ENCODE measurements at regions of chr19 and their contacts with region 1.

Region 1: GRCh38 chr19:17947815-17948513 is 15.1 kb downstream of the CCDC124 start:
- DNase-seq: peak; percentile 91
- H3K4me3 ChIP-seq: peak overlapping the region; percentile 45 to 79 (median 62)
- H3K27ac ChIP-seq: peak overlapping the region; percentile 39 to 68 (median 65)
- H3K4me1 ChIP-seq: peaks cover 28 to 52% (median 45%) of the 10 kb centered on the region in 4 donors
- H3K27me3 ChIP-seq: peaks cover 45% of the 10 kb centered on the region
- CTCF ChIP-seq: no peak
- EP300 ChIP-seq: no peak
- POLR2A ChIP-seq: no peak

Region 2: GRCh38 chr19:16394681-16395375 is 1553.1 kb before region 1 on chr19:
- in situ Hi-C with region 1: no loop called
- intact Hi-C with region 1: no loop called
- DNase-seq: no peak
- H3K4me3 ChIP-seq: no peak overlapping the region
- H3K27ac ChIP-seq: no peak overlapping the region
- H3K4me1 ChIP-seq: peaks cover 0 to 8% (median 4%) of the 10 kb centered on the region in 4 donors
- H3K27me3 ChIP-seq: no peaks in the 10 kb centered on the region
- CTCF ChIP-seq: no peak
- EP300 ChIP-seq: no peak
- POLR2A ChIP-seq: no peak

Region 3: DNA sequence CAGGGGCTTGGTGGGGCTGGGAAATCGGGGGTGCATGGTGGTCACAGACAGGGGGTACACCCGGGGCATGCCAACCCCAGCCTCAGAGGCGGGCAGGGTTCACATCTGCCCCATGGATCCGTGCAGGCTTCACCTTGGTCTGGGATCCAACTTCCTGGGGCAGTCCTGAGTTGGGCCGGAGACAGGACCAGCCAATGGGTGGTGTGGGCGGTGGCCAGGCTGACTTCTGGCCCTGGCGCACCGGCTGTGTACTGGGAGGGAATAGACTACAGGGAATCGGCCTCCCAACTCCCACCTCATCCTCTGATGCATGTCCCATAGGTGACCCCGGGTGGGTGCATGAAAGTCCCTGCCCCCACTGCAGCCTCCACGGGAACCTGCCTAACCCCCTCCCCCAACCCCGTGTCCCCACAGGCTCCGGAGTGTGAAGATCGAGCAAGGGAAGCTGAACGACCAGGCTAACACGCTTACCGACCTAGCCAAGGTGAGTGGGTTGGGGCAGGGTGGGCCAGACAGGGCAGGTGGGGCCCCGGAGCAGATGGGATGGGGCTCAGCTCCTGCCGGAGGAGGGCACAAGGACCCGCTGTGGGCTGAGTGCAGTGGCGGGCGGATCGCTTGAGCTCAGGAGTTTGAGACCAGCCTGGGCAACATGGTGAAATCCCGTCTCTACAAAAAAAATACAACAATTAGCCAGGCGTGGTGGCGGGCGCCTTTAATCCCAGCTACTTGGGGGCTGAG is 45.3 kb after region 1 on chr19:
- in situ Hi-C with region 1: loop called in 3 of 4 experiments (anchors 5 to 10 kb)
- intact Hi-C with region 1: no loop called
- DNase-seq: no peak
- H3K4me3 ChIP-seq: no peak overlapping the region
- H3K27ac ChIP-seq: no peak overlapping the region
- H3K4me1 ChIP-seq: no peaks in the 10 kb centered on the region
- H3K27me3 ChIP-seq: peaks cover 13% of the 10 kb centered on the region
- CTCF ChIP-seq: no peak
- EP300 ChIP-seq: no peak
- POLR2A ChIP-seq: no peak

Region 4: DNA sequence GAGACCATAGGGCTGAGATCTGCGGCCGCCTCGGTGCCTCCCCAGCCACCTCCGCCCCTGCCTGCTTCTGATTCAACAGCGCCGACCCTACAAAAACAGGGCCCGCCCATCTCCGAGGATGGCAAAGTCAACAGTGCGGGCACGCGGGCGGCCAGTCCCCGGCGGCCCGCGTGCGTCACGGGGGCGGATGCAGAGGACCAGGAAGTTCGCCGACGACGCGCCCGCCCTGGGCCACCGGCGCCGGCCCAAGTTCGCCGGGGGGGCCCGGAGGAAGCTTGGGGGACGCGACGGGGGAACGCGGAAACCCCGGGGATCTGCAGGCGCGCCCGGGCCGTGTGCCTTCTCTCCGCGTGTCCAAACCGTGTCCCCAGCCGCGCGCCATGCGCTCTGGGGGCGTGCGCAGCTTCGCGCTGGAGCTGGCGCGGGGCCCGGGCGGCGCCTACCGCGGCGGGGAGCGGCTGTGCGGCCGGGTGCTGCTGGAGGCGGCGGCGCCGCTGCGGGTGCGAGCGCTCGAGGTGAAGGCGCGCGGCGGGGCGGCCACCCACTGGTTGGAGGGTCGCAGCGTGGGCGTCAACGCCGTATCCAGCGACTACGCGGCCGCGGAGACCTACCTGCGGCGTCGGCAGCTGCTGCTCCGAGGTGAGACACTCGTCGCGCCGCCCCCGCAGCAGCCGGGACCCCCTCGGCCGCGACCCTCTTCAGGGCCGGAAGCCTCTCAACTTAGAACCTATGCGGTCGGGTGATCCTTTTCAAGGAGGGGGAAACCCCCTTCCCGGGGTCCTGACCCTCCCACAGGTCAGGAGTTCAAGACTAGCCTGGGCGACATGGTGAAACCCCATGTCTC is 53.2 kb after region 1 on chr19:
- in situ Hi-C with region 1: loop called in 2 of 4 experiments (anchors 10 kb)
- intact Hi-C with region 1: no loop called
- DNase-seq: peak; percentile 95
- H3K4me3 ChIP-seq: peak overlapping the region; percentile 69 to 86 (median 78)
- H3K27ac ChIP-seq: peak overlapping the region; percentile 89 to 92 (median 90)
- H3K4me1 ChIP-seq: peaks cover 4 to 28% (median 19%) of the 10 kb centered on the region in 4 donors
- H3K27me3 ChIP-seq: no peaks in the 10 kb centered on the region
- CTCF ChIP-seq: no peak
- EP300 ChIP-seq: no peak
- POLR2A ChIP-seq: peak; percentile 84

Measured in transverse colon (tissue), 4 donors.